K562 (cell line): ENCODE measurements at regions of chr6 and their contacts with region 1.

Region 1: DNA sequence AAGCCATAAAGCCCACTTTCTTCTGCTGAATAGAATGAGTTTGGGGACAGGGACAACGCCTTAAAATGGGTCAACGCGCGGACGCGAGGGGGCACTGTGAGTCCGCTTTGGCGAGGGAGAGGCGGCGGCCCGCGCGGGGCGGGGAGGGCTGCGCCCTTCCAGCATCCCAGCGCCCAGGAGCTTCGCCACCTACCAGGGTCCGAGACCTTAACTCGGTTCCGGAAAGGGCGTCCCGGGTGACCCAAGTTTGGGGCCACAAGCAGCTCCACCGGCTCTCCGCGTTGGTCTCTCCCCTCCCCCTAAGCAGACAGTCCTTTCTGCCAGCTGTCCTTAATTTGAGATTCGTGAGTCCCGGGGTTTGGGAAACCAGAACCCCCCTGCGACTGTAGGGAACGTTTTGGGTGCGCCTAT is 1.8 kb upstream of the SAMD5 start:
- DNase-seq: peak; percentile 85 to 88 (median 87)
- ATAC-seq: peak; percentile 92
- H3K4me3 ChIP-seq: no peak overlapping the region
- H3K27ac ChIP-seq: no peak overlapping the region
- H3K4me1 ChIP-seq: peaks cover 18 to 29% of the 10 kb centered on the region in 2 experiments; a peak in 4 of 5 replicates
- H3K27me3 ChIP-seq: peaks cover 9 to 33% of the 10 kb centered on the region in 2 experiments
- CTCF ChIP-seq: peak; percentile 93 to 94 (median 94)
- EP300 ChIP-seq: no peak
- POLR2A ChIP-seq: no peak
- RAD21 ChIP-seq: peak; percentile 96 to 99

Region 2: GRCh38 chr6:147345902-147346301 is 160.8 kb before region 1 on chr6:
- CTCF ChIA-PET with region 1: no interaction called
- POLR2A ChIA-PET with region 1: no interaction called
- in situ Hi-C with region 1: no loop called
- intact Hi-C with region 1: no loop called
- DNase-seq: no peak
- ATAC-seq: no peak
- H3K4me3 ChIP-seq: no peak overlapping the region
- H3K27ac ChIP-seq: no peak overlapping the region
- H3K4me1 ChIP-seq: no peaks in the 10 kb centered on the region
- H3K27me3 ChIP-seq: no peaks in the 10 kb centered on the region
- CTCF ChIP-seq: no peak
- EP300 ChIP-seq: no peak
- POLR2A ChIP-seq: no peak
- RAD21 ChIP-seq: no peak

Region 3: GRCh38 chr6:147390909-147391536 is 115.7 kb before region 1 on chr6:
- CTCF ChIA-PET with region 1: interaction called, 5 read pairs
- POLR2A ChIA-PET with region 1: no interaction called
- in situ Hi-C with region 1: no loop called
- intact Hi-C with region 1: loop called (anchors 2 kb)
- DNase-seq: peak in 2 of 4 experiments; percentile 24 to 34
- ATAC-seq: 0 out of 3 replicates have a peak, but pooled peaks have one; percentile 34
- H3K4me3 ChIP-seq: no peak overlapping the region
- H3K27ac ChIP-seq: no peak overlapping the region
- H3K4me1 ChIP-seq: no peaks in the 10 kb centered on the region
- H3K27me3 ChIP-seq: no peaks in the 10 kb centered on the region
- CTCF ChIP-seq: peak; percentile 43 to 74 (median 46); a peak in 5 of 6 replicates
- EP300 ChIP-seq: no peak
- POLR2A ChIP-seq: no peak
- RAD21 ChIP-seq: peak; percentile 60 to 67

Region 4: DNA sequence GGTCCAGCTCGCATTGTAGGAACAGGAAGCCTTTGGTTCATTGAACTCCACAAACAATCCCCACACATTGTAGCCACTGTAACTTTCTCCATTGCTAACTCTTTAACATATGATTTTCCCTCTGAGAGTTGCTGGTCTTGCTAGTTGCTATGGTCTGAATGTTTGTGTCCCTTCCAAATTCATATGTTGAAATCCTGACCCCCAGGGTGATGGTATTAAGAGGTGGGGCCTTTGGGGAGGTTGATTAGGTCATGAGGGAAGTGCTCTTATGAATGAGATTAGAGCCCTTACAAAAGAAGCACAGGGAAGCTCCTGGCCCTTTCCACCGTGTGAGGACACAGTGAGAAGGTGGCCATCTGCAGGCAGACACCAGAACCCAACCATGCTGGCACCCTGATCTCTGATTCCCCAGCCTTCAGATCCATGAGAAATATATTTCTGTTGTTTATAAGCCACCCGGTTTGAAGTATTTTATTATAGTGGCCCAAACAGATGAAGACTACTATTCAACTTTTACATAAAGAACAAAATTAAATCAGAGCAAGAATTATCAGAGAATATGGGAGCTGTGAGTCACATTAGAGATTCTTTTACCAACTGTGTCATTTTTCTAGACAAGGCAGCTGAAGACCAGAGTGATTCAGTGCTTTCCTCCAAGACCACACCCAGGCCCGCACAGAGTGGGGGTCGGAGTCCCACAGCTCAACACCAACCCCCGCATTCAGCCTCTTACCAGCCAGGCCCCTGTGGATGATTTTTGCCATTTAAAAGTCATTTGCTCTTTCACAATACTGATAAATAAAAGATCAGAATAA is 144.7 kb after region 1 on chr6:
- CTCF ChIA-PET with region 1: no interaction called
- POLR2A ChIA-PET with region 1: no interaction called
- in situ Hi-C with region 1: no loop called
- intact Hi-C with region 1: loop called (anchors 2 kb)
- DNase-seq: peak in 1 of 4 experiments; percentile 31
- ATAC-seq: peak; percentile 88
- H3K4me3 ChIP-seq: no peak overlapping the region
- H3K27ac ChIP-seq: no peak overlapping the region
- H3K4me1 ChIP-seq: no peaks in the 10 kb centered on the region
- H3K27me3 ChIP-seq: peaks cover 3 to 8% of the 10 kb centered on the region in 2 experiments; a peak in 4 of 5 replicates
- CTCF ChIP-seq: peak in 2 of 3 experiments; percentile 17 to 46; a peak in 3 of 6 replicates
- EP300 ChIP-seq: no peak
- POLR2A ChIP-seq: no peak
- RAD21 ChIP-seq: peak; percentile 52 to 59

Region 5: DNA sequence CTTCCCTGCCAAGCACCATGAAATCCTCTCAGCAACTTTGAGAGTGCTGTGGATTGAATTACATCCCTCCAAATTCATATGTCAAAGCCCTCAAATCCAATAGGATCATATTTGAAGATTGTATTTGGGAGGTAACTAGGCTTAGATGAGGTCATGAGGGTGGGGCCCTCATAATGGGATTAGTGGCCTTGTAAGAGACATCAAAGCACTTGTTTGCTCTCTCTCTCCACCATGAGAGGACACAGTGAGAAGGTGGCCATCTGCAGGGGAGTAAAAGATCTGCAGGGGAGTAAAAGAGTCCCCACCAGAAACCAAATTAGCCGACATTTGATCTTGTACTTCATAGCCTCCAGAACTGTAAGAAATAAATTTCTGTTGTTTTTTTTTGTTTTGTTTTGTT is 300.0 kb after region 1 on chr6:
- CTCF ChIA-PET with region 1: interaction called, 3 read pairs
- POLR2A ChIA-PET with region 1: no interaction called
- in situ Hi-C with region 1: no loop called
- intact Hi-C with region 1: loop called (anchors 2 kb)
- DNase-seq: peak in 3 of 4 experiments; percentile 20 to 75 (median 22)
- ATAC-seq: peak; percentile 95
- H3K4me3 ChIP-seq: no peak overlapping the region
- H3K27ac ChIP-seq: no peak overlapping the region
- H3K4me1 ChIP-seq: peaks cover 0 to 3% of the 10 kb centered on the region in 2 experiments; a peak in 2 of 5 replicates
- H3K27me3 ChIP-seq: no peaks in the 10 kb centered on the region
- CTCF ChIP-seq: peak; percentile 50 to 59 (median 55); a peak in 5 of 6 replicates
- EP300 ChIP-seq: no peak
- POLR2A ChIP-seq: no peak
- RAD21 ChIP-seq: peak; percentile 6 to 47; a peak in 2 of 4 replicates

Region 6: DNA sequence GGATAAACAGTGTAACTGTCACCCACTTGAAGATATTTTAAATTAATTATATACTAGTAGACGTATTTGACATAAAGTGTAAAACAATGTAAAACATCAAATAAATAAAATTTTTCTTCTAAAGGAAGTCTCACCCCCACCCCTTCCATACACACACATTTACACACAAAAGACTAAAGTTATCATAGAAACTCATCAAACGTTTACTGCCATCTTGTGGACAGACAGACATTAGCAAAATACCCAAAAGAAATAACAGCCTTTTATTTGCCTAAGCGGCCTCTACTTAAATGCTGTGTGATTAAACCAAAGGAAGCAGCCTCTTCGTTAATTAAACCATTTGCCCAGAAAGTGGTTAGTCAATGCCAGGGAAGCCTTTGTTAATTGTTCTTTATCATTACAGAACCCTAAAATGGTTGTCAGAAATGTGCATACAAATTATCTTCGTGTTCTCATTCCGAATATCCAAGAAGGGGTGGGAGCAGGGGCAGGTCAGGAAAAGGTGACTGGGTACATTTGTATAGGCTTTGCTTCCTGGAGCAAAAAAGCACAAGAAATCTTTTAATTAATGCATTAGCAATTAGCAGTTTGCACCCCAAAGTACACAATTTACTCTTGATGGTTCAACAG is 659.7 kb after region 1 on chr6:
- CTCF ChIA-PET with region 1: interaction called, 27 read pairs
- POLR2A ChIA-PET with region 1: no interaction called
- in situ Hi-C with region 1: loop called (anchors 5 kb)
- intact Hi-C with region 1: loop called (anchors 1 kb)
- DNase-seq: peak; percentile 43 to 65 (median 60)
- ATAC-seq: peak; percentile 84
- H3K4me3 ChIP-seq: no peak overlapping the region
- H3K27ac ChIP-seq: no peak overlapping the region
- H3K4me1 ChIP-seq: peaks cover 0 to 4% of the 10 kb centered on the region in 2 experiments; a peak in 1 of 5 replicates
- H3K27me3 ChIP-seq: peaks cover 6 to 7% of the 10 kb centered on the region in 2 experiments; a peak in 3 of 5 replicates
- CTCF ChIP-seq: peak; percentile 48 to 81 (median 54); a peak in 5 of 6 replicates
- EP300 ChIP-seq: no peak
- POLR2A ChIP-seq: no peak
- RAD21 ChIP-seq: peak; percentile 74 to 85

Region 7: GRCh38 chr6:148250975-148251685 is 744.4 kb after region 1 on chr6:
- CTCF ChIA-PET with region 1: no interaction called
- POLR2A ChIA-PET with region 1: no interaction called
- in situ Hi-C with region 1: no loop called
- intact Hi-C with region 1: loop called (anchors 5 kb)
- DNase-seq: peak in 1 of 4 experiments; percentile 29
- ATAC-seq: peak; percentile 31; the same call in 1 of the 3 replicates
- H3K4me3 ChIP-seq: no peak overlapping the region
- H3K27ac ChIP-seq: no peak overlapping the region
- H3K4me1 ChIP-seq: no peaks in the 10 kb centered on the region
- H3K27me3 ChIP-seq: peaks cover 4 to 11% of the 10 kb centered on the region in 2 experiments; a peak in 4 of 5 replicates
- CTCF ChIP-seq: peak; percentile 15 to 57 (median 34); a peak in 4 of 6 replicates
- EP300 ChIP-seq: no peak
- POLR2A ChIP-seq: no peak
- RAD21 ChIP-seq: peak; percentile 56 to 60